ENCODE measurements at regions of chr10 and their contacts with region 1.

Region 1: DNA sequence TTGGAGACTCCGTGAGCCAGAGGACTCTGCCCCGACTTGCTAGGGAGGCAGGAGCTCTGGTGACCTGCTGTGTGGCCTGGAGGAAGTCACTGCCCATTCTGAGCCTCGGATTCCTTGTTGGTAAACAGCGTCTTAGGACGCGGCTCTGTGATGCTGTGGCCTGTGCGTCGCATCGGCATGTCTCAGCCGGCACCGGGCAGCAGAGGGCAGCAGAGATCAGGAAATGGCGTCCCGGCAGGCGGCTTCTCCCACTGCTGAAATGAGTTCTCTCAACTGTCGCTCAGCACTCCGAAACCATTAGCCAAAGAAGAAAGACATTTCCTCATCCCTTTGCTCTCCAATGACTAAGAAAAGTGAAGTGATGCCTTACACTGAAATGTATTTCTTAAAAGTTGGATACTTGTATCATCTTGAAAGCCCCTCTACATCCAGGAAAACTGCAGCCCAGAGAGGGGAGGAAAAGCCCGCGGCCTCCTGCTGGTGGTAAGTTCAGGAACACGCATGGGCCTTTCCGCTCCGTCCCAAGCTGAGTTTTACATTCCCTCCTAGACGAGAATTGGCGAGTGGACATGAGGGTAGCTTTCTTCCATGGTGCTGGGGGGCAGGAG is 91.7 kb downstream of the WDR11 start:
- DNase-seq: peak; percentile 83
- H3K4me3 ChIP-seq: no peak overlapping the region
- H3K27ac ChIP-seq: no peak overlapping the region
- H3K4me1 ChIP-seq: no peaks in the 10 kb centered on the region
- H3K27me3 ChIP-seq: no peaks in the 10 kb centered on the region
- CTCF ChIP-seq: peak; percentile 77

Region 2: GRCh38 chr10:120600871-120601649 is 341.9 kb before region 1 on chr10:
- intact Hi-C with region 1: no loop called
- DNase-seq: no peak
- H3K4me3 ChIP-seq: no peak overlapping the region
- H3K27ac ChIP-seq: no peak overlapping the region
- H3K4me1 ChIP-seq: no peaks in the 10 kb centered on the region
- H3K27me3 ChIP-seq: no peaks in the 10 kb centered on the region
- CTCF ChIP-seq: no peak

Region 3: GRCh38 chr10:120905268-120905667 is 37.6 kb before region 1 on chr10:
- intact Hi-C with region 1: no loop called
- DNase-seq: no peak
- H3K4me3 ChIP-seq: no peak overlapping the region
- H3K27ac ChIP-seq: no peak overlapping the region
- H3K4me1 ChIP-seq: no peaks in the 10 kb centered on the region
- H3K27me3 ChIP-seq: no peaks in the 10 kb centered on the region
- CTCF ChIP-seq: no peak

Region 4: DNA sequence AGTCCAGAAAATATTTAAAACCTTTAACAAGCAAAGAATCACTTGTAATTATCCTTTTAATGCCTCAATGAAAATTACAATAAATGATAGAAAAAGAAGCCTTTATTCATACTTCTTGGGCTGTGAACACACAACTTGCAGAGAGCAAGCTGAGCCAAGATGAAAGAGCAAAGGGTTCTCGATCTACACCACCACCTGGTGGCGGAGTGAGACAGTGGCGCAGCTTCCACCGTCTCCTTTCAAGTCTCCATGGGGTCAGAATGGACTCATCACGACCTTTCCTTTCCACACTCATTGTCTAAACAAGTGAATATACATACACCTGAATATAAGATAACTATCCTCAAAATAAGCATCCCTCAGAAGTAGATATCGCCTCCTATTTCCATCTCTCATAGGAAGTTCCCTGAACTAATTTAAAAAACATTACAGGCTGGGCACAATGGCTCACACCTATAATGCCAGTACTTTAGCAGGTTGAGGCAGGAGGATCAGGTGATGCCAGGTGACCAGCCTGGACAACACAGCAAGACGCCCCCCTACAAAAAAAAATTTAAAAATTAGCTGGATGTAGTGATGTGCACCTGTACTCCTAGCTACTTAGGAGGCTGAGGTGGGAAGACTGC is 944.2 kb after region 1 on chr10:
- intact Hi-C with region 1: loop called (anchors 5 kb)
- DNase-seq: peak; percentile 62
- H3K4me3 ChIP-seq: no peak overlapping the region
- H3K27ac ChIP-seq: no peak overlapping the region
- H3K4me1 ChIP-seq: no peaks in the 10 kb centered on the region
- H3K27me3 ChIP-seq: no peaks in the 10 kb centered on the region
- CTCF ChIP-seq: peak; percentile 87

Measured in colonic mucosa (tissue), 4 donors.